ENCODE measurements at regions of chr1 and their contacts with region 1.

Region 1: DNA sequence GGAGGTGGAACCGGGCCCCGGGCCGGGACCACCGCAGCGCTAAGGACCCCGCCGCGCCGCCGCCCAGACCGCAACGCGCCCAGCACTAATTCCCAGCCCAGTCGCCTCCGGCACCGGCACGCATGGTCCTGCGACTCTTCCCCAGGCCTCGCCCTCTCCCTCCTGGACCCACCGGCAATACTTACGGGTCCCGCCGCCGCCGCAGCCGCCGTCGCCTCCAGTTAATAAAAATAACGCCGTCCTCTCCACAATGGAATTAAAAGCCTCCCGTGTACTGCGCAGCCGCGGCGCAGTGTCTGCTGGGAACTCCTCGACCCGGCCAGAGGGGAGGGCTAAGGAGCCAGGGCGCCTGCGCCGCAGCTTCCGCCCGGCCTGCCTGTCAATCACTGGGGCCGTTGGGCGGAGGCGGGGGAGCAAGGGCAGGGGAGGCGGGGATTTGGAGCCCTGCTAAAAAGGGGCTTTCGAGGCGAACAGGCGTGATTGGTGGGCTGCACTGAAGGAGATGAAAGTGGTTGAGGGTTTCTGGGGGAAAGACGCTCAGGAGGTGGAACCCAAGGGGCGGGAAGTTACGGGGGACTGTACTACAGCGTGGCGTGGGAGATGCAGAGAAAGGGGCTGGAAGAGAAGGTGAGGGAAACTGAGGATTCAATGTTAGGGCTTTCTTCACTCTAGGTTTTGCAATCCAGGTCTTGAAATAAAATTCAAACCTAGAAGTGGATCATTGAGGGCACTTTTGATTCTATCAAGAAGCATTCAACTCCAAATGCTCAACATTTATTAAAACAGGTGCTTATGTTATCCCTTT is at the start of gene ZNF281:
- DNase-seq: peak; percentile 95 to 98
- H3K4me3 ChIP-seq: peak within 1 kb of the TSS; percentile 76 to 92 (median 90)
- H3K27ac ChIP-seq: peak within 1 kb of the TSS; percentile 77
- H3K4me1 ChIP-seq: peaks cover 2 to 11% (median 8%) of the 10 kb centered on the region in 4 experiments; a peak in 6 of 7 replicates
- H3K27me3 ChIP-seq: no peaks in the 10 kb centered on the region
- CTCF ChIP-seq: peak in 1 of 3 experiments; percentile 4; a peak in 1 of 4 replicates
- EP300 ChIP-seq: no peak
- POLR2A ChIP-seq: peak; percentile 7 to 76
- RAD21 ChIP-seq: no peak
- total RNA-seq, gene ZNF281: 61.3 and 61.4 TPM in 2 replicates

Region 2: GRCh38 chr1:200296091-200296661 is 113.8 kb before region 1 on chr1:
- CTCF ChIA-PET with region 1: no interaction called
- POLR2A ChIA-PET with region 1: no interaction called
- DNase-seq: no peak
- H3K4me3 ChIP-seq: no peak overlapping the region
- H3K27ac ChIP-seq: no peak overlapping the region
- H3K4me1 ChIP-seq: no peaks in the 10 kb centered on the region
- H3K27me3 ChIP-seq: peaks cover 0 to 2% (median 0%) of the 10 kb centered on the region in 4 experiments; a peak in 2 of 7 replicates
- CTCF ChIP-seq: no peak
- EP300 ChIP-seq: no peak
- POLR2A ChIP-seq: no peak
- RAD21 ChIP-seq: no peak

Region 3: DNA sequence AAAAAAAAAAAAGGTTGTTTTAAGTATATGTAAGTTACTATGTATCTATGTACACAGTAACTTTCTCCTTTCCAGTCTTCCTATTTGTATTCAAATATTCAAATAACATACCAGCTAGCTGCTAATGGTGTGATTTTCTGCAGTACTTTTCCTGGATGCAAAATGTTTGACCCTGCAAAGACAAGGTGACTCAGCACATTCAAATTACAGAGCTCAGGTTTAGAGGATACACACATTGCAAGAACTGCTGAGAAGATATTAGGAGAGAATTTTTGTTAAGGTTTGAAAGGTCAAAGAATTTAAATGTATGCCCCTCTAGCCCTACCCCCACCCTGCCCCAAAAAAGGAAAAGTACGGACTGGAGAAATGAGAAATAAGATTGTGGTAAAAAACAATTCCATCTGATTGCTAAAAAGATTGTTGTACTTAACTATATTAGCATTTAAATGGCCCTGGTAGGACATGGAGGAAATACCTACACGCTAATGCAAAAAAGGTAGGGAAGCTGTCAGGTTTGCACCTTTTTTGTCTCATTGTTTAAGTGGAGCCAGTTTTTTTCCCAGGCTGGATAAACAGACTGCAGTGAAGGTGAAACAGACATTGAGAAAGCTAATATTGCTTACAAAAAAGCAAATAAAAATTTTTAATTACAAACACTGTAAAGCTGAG is 45.7 kb before region 1 on chr1:
- CTCF ChIA-PET with region 1: interaction called, 11 read pairs
- POLR2A ChIA-PET with region 1: interaction called, 51 read pairs
- DNase-seq: peak in 1 of 2 experiments; percentile 25
- H3K4me3 ChIP-seq: peak overlapping the region in 1 of 4 experiments; percentile 48; a peak in 2 of 8 replicates
- H3K27ac ChIP-seq: peak overlapping the region; percentile 83
- H3K4me1 ChIP-seq: peaks cover 4 to 36% (median 23%) of the 10 kb centered on the region in 4 experiments
- H3K27me3 ChIP-seq: no peaks in the 10 kb centered on the region
- CTCF ChIP-seq: no peak
- EP300 ChIP-seq: peak in 1 of 2 experiments; percentile 70; a peak in 1 of 3 replicates
- POLR2A ChIP-seq: no peak
- RAD21 ChIP-seq: no peak

Region 4: GRCh38 chr1:200372080-200372884 is 37.7 kb before region 1 on chr1:
- CTCF ChIA-PET with region 1: interaction called, 3 read pairs
- POLR2A ChIA-PET with region 1: interaction called, 20 read pairs
- DNase-seq: peak; percentile 36 to 43
- H3K4me3 ChIP-seq: peak overlapping the region in 1 of 4 experiments; percentile 56; a peak in 1 of 8 replicates
- H3K27ac ChIP-seq: no peak overlapping the region
- H3K4me1 ChIP-seq: peaks cover 2 to 25% (median 11%) of the 10 kb centered on the region in 4 experiments; a peak in 6 of 7 replicates
- H3K27me3 ChIP-seq: no peaks in the 10 kb centered on the region
- CTCF ChIP-seq: no peak
- EP300 ChIP-seq: no peak
- POLR2A ChIP-seq: no peak
- RAD21 ChIP-seq: no peak

Region 5: DNA sequence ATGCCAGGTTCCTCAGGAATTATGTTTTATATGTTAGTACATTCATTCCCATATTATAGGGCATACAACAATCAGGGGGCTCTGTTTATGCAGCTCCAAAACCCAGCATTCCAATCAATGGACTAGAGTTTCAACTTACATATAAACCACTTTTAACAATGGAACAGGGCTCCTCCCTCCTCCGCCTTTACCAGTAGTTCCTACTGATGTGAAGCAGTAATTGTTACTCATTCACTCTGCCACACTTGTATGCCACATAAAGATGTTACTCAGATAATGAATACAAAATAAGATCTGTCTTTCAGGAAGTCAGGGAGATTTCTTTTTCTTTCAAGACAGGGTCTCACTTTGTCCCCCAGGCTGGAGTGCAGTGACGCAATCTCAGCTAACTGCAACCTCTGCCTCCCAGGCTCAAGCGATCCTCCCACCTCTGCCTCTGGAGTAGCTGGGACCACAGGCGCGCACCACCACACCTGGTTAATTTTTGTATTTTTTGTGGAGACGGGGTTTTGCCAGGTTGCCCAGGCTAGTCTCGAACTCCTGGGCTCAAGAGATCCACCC is 17.3 kb before region 1 on chr1:
- CTCF ChIA-PET with region 1: interaction called, 4 read pairs
- POLR2A ChIA-PET with region 1: interaction called, 14 read pairs
- DNase-seq: no peak
- H3K4me3 ChIP-seq: peak overlapping the region in 1 of 4 experiments; percentile 37; a peak in 1 of 8 replicates
- H3K27ac ChIP-seq: no peak overlapping the region; the same call in 1 of the 2 replicates
- H3K4me1 ChIP-seq: peaks cover 10 to 28% (median 17%) of the 10 kb centered on the region in 4 experiments; a peak in 6 of 7 replicates
- H3K27me3 ChIP-seq: no peaks in the 10 kb centered on the region
- CTCF ChIP-seq: no peak
- EP300 ChIP-seq: no peak
- POLR2A ChIP-seq: no peak
- RAD21 ChIP-seq: no peak

Region 6: GRCh38 chr1:200428482-200429205 is 18.7 kb after region 1 on chr1:
- CTCF ChIA-PET with region 1: interaction called, 3 read pairs
- POLR2A ChIA-PET with region 1: interaction called, 11 read pairs
- DNase-seq: no peak
- H3K4me3 ChIP-seq: no peak overlapping the region
- H3K27ac ChIP-seq: no peak overlapping the region
- H3K4me1 ChIP-seq: no peaks in the 10 kb centered on the region
- H3K27me3 ChIP-seq: no peaks in the 10 kb centered on the region
- CTCF ChIP-seq: no peak
- EP300 ChIP-seq: no peak
- POLR2A ChIP-seq: no peak
- RAD21 ChIP-seq: no peak

Region 7: GRCh38 chr1:200550367-200550766 is 140.4 kb after region 1 on chr1:
- CTCF ChIA-PET with region 1: no interaction called
- POLR2A ChIA-PET with region 1: no interaction called
- DNase-seq: no peak
- H3K4me3 ChIP-seq: no peak overlapping the region
- H3K27ac ChIP-seq: no peak overlapping the region
- H3K4me1 ChIP-seq: no peaks in the 10 kb centered on the region
- H3K27me3 ChIP-seq: no peaks in the 10 kb centered on the region
- CTCF ChIP-seq: no peak
- EP300 ChIP-seq: no peak
- POLR2A ChIP-seq: no peak
- RAD21 ChIP-seq: no peak